HepG2 (cell line): ENCODE measurements at regions of chr3 and their contacts with region 1.

Region 1: DNA sequence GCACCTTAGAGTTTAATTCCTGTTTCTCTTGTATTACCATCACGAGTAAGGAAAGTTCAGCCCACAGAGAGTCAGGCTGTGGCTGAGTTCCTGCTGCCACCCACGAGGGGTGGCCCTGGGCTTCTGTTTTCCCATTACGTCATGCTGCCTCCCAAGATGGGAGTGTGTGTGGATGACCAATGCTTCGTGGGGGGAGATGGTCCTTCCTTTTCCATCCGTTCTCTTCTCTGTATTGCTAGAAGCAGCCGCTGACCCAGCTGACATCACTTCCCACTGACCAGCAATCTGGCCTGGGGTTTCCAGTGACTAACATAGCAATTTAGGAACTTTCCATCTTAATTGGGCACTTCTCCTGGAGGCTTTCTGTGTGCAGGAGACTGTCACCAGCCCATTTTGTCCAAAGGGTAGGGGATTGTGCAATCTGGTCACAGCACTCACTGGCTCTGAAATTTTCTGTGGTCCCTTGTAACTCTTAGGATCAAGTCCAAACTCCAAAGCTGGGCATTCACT is 9.3 kb downstream of the IRAK2 start:
- DNase-seq: peak; percentile 55
- ATAC-seq: peak; percentile 81
- H3K4me3 ChIP-seq: no peak overlapping the region
- H3K27ac ChIP-seq: peak overlapping the region; percentile 56
- H3K4me1 ChIP-seq: peaks cover 36% of the 10 kb centered on the region
- H3K27me3 ChIP-seq: no peaks in the 10 kb centered on the region
- CTCF ChIP-seq: no peak
- EP300 ChIP-seq: peak in 1 of 2 experiments; percentile 47; a peak in 1 of 4 replicates
- POLR2A ChIP-seq: no peak
- RAD21 ChIP-seq: no peak

Region 2: GRCh38 chr3:10192953-10193691 is 19.1 kb after region 1 on chr3:
- CTCF ChIA-PET with region 1: no interaction called
- POLR2A ChIA-PET with region 1: interaction called, 10 read pairs
- in situ Hi-C with region 1: no loop called
- intact Hi-C with region 1: no loop called
- DNase-seq: peak; percentile 28
- ATAC-seq: peak; percentile 39
- H3K4me3 ChIP-seq: no peak overlapping the region
- H3K27ac ChIP-seq: peak overlapping the region; percentile 65
- H3K4me1 ChIP-seq: peaks cover 60% of the 10 kb centered on the region
- H3K27me3 ChIP-seq: no peaks in the 10 kb centered on the region
- CTCF ChIP-seq: 0 out of 2 replicates have a peak, but pooled peaks have one; percentile 11
- EP300 ChIP-seq: no peak
- POLR2A ChIP-seq: no peak
- RAD21 ChIP-seq: no peak